Breast epithelium (tissue), 4 donors: ENCODE measurements at regions of chr12 and their contacts with region 1.

Region 1: GRCh38 chr12:12353807-12354206 is 3.1 kb upstream of the BORCS5 start:
- DNase-seq: no peak
- H3K4me3 ChIP-seq: no peak overlapping the region
- H3K27ac ChIP-seq: no peak overlapping the region
- H3K4me1 ChIP-seq: peaks cover 0 to 15% of the 10 kb centered on the region in 2 donors
- H3K27me3 ChIP-seq: no peaks in the 10 kb centered on the region
- CTCF ChIP-seq: no peak
- POLR2A ChIP-seq: no peak

Region 2: GRCh38 chr12:12392413-12392812 is 38.6 kb after region 1 on chr12:
- intact Hi-C with region 1: loop called (anchors 2 kb)
- DNase-seq: no peak
- H3K4me3 ChIP-seq: no peak overlapping the region
- H3K27ac ChIP-seq: no peak overlapping the region
- H3K4me1 ChIP-seq: no peaks in the 10 kb centered on the region
- H3K27me3 ChIP-seq: no peaks in the 10 kb centered on the region
- CTCF ChIP-seq: no peak
- POLR2A ChIP-seq: no peak

Region 3: DNA sequence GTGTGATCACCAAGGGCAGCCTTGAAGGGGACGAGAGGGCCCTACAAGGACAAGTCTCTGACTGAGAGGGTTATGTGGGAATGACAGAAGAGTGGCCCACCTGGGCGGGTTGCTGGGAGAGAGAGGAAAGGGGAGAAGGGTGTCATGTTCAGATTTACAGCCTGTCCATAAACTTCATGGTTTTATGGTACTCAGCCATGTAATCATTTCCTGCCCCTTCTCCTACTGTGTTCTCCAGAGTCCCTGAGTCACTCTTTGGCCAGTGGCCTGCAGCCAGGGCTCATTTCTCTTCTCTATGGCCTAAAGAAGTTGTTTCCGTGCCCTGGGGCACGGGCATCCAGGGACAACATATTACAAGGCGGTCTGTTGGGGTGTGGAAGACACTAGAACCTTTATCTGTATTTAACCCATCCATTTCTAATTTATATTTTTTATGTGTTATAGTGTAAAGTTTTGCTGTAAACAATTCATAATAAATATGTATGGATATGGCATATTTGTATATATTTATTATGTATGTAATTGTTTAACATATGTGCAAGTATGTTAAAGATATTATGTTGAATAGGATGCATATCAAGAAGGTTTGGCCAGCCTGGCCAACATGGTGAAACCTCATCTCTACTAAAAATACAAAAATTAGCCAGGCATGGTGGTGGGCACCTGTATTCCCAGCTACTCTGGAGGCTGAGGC is 486.2 kb after region 1 on chr12:
- intact Hi-C with region 1: no loop called
- DNase-seq: peak in 1 of 2 donors; percentile 36
- H3K4me3 ChIP-seq: no peak overlapping the region
- H3K27ac ChIP-seq: peak overlapping the region; percentile 21 to 48
- H3K4me1 ChIP-seq: no peaks in the 10 kb centered on the region
- H3K27me3 ChIP-seq: no peaks in the 10 kb centered on the region
- CTCF ChIP-seq: no peak
- POLR2A ChIP-seq: no peak